ENCODE measurements at regions of chr2 and their contacts with region 1.

Region 1: GRCh38 chr2:59025157-59025757 is 784.1 kb upstream of the FANCL start:
- DNase-seq: peak; percentile 27 to 55 (median 34)
- ATAC-seq: peak; percentile 93
- H3K4me3 ChIP-seq: no peak overlapping the region
- H3K27ac ChIP-seq: no peak overlapping the region
- H3K4me1 ChIP-seq: no peaks in the 10 kb centered on the region
- H3K27me3 ChIP-seq: no peaks in the 10 kb centered on the region
- CTCF ChIP-seq: peak; percentile 75 to 86 (median 82)
- EP300 ChIP-seq: no peak
- POLR2A ChIP-seq: no peak
- RAD21 ChIP-seq: peak; percentile 56 to 82

Region 2: GRCh38 chr2:59015027-59015426 is 10.2 kb before region 1 on chr2:
- CTCF ChIA-PET with region 1: no interaction called
- POLR2A ChIA-PET with region 1: no interaction called
- in situ Hi-C with region 1: no loop called
- intact Hi-C with region 1: no loop called
- DNase-seq: no peak
- ATAC-seq: no peak
- H3K4me3 ChIP-seq: no peak overlapping the region
- H3K27ac ChIP-seq: no peak overlapping the region
- H3K4me1 ChIP-seq: no peaks in the 10 kb centered on the region
- H3K27me3 ChIP-seq: no peaks in the 10 kb centered on the region
- CTCF ChIP-seq: no peak
- EP300 ChIP-seq: no peak
- POLR2A ChIP-seq: no peak
- RAD21 ChIP-seq: no peak

Region 3: GRCh38 chr2:59047373-59047995 is 22.2 kb after region 1 on chr2:
- CTCF ChIA-PET with region 1: no interaction called
- POLR2A ChIA-PET with region 1: no interaction called
- in situ Hi-C with region 1: no loop called
- intact Hi-C with region 1: no loop called
- DNase-seq: no peak
- ATAC-seq: no peak
- H3K4me3 ChIP-seq: no peak overlapping the region
- H3K27ac ChIP-seq: no peak overlapping the region
- H3K4me1 ChIP-seq: no peaks in the 10 kb centered on the region
- H3K27me3 ChIP-seq: no peaks in the 10 kb centered on the region
- CTCF ChIP-seq: no peak
- EP300 ChIP-seq: no peak
- POLR2A ChIP-seq: no peak
- RAD21 ChIP-seq: no peak

Region 4: DNA sequence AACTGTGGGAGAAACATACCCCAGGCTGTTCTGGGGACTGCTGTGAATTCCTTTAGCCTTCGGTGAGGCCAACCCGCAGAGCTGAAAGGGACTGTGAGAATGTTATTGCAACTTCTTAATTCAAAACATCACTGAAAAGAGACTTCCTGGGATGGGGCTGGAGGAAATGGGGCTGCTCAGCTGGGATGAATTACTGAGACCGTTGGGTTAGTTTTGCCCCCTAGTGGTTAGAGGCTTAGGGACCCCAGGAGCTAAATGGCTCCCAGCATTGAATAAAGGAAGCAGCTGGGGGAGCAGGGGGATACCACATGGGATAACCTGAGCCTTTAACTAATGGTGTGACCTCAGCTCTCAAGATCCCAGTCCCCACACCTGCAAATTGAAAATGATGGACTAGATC is 157.0 kb after region 1 on chr2:
- CTCF ChIA-PET with region 1: no interaction called
- POLR2A ChIA-PET with region 1: no interaction called
- in situ Hi-C with region 1: no loop called
- intact Hi-C with region 1: loop called (anchors 5 kb)
- DNase-seq: peak; percentile 25 to 54 (median 42)
- ATAC-seq: peak; percentile 89
- H3K4me3 ChIP-seq: no peak overlapping the region
- H3K27ac ChIP-seq: no peak overlapping the region
- H3K4me1 ChIP-seq: no peaks in the 10 kb centered on the region; a peak in 1 of 5 replicates
- H3K27me3 ChIP-seq: no peaks in the 10 kb centered on the region
- CTCF ChIP-seq: peak; percentile 47 to 61 (median 60)
- EP300 ChIP-seq: no peak
- POLR2A ChIP-seq: no peak
- RAD21 ChIP-seq: peak; percentile 48 to 63

Region 5: DNA sequence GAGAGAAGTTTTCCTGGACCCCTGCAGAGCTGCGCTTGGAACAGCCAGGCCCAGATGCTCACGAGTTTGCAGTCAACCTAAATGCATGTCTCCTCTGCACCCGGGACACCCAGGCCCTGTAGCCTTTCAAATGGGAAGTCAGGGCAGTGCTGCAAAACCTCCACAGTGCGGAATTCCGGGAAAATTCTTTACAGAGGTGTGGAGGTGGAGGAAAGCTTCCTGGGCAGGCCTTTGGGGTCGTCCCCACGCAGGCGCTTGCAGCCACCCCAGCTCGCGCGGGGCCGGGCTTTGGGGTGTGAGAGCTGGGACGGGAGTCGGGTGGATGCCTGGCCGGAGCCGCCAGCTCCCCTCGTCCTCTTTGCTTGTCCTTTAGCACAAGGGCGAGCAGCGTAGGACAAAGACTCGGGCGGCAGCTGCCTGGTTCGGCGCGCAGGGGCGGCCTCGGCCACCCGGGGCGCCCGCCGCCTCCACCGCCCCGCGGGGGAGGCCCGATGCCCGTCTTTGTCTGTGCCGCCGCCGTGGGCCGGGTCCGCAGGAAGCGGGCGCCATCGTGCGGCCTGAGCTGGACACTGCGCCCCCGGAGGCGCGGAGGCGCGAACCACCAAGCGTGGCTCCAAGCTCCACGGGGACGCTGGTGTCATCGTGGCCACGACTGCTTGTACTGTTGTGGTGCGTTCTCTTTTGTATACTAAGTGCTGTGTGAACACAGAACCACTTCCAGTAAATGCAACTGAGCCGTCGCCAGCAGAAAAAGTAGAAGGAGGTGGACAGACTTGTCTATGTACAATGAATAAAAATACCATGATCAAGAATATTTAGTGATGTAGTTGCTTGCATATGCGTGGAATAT is 1556.4 kb after region 1 on chr2:
- CTCF ChIA-PET with region 1: no interaction called
- POLR2A ChIA-PET with region 1: no interaction called
- in situ Hi-C with region 1: no loop called
- intact Hi-C with region 1: loop called (anchors 10 kb)
- DNase-seq: peak; percentile 65 to 87 (median 84)
- ATAC-seq: peak; percentile 98
- H3K4me3 ChIP-seq: peak overlapping the region; percentile 19; the same call in 1 of the 2 replicates
- H3K27ac ChIP-seq: no peak overlapping the region
- H3K4me1 ChIP-seq: peaks cover 0 to 7% of the 10 kb centered on the region in 2 experiments; a peak in 2 of 5 replicates
- H3K27me3 ChIP-seq: peaks cover 14 to 37% of the 10 kb centered on the region in 2 experiments; a peak in 4 of 5 replicates
- CTCF ChIP-seq: peak; percentile 86 to 97 (median 87)
- EP300 ChIP-seq: no peak
- POLR2A ChIP-seq: no peak
- RAD21 ChIP-seq: peak; percentile 85 to 87

Measured in K562 (cell line).